ENCODE measurements at regions of chr10 and their contacts with region 1.

Region 1: DNA sequence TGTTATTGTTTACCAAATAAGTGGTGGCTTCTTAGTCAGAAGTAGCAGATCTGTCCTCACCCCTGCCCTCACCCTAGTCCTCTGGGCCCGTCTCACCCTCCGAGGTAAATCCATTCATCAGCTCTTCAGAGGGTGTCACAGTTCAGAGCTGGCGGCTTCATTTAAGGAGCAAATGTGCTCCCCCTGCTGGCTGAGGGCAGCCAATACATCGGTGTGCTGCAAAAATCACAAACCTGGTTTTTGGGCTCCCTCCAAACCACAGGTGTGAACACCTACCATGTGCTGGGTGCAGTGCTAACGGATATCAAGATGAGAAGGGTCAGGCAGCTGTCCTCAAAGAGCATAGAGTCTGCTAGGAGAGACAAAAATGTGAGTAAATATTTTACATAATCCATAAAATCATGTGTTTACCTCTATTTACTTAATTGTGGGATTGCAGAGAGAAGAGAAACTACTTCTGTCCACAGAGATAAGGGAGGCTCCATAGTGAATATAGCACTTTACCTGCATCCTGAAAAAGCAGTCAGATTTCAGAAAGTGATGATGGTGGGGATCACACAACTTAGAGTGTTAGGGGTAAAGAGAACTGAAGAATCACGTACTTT is 15.5 kb upstream of the CRTAC1 start:
- DNase-seq: peak; percentile 30 to 64 (median 61)
- ATAC-seq: peak; percentile 41 to 63
- H3K4me3 ChIP-seq: no peak overlapping the region
- H3K27ac ChIP-seq: no peak overlapping the region
- H3K4me1 ChIP-seq: peaks cover 3% of the 10 kb centered on the region
- H3K27me3 ChIP-seq: no peaks in the 10 kb centered on the region

Region 2: DNA sequence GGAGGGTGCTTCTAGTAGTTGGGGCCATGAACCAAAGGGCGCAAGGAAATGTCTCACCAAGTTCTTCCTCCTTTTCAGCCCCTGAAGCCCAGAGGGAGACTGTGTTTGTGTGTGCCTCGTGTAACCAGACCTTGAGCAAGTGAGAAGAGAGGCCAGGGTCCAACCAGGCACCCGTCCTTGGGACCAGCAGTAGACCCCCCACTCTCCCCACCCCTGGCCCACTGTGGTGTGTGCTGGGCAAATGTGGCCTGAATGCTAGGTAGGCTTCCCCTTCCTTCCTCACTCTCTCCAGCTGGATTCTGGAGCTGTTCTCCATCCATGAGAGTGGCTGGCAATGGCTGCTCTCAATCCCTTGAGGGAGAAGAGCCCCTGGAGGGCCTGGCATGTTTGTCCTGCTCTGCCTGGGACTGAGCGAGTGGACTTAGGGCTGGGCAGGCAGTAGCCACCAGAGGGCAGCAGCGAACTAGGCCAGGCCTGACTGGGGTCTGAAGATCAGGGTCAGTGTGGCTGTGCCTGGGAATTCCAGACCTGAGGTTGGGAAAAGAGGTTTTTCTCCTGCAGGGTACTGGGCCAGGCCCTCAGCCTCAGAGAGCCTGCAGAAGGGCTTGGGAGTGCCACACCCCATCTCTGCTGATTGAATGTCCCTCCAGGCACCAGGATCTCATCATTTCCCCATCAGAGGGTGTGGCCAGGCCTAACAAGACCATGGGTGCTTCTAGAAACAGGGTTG is 286.6 kb before region 1 on chr10:
- intact Hi-C with region 1: loop called in 2 of 4 experiments (anchors 10 kb)
- DNase-seq: peak; percentile 64 to 89 (median 87)
- ATAC-seq: peak; percentile 74 to 81
- H3K4me3 ChIP-seq: no peak overlapping the region
- H3K27ac ChIP-seq: no peak overlapping the region
- H3K4me1 ChIP-seq: no peaks in the 10 kb centered on the region
- H3K27me3 ChIP-seq: no peaks in the 10 kb centered on the region

Region 3: GRCh38 chr10:97921581-97922021 is 124.3 kb before region 1 on chr10:
- intact Hi-C with region 1: loop called in 1 of 4 experiments (anchors 5 kb)
- DNase-seq: peak in 1 of 3 donors; percentile 79
- ATAC-seq: peak; percentile 58 to 63
- H3K4me3 ChIP-seq: no peak overlapping the region
- H3K27ac ChIP-seq: peak overlapping the region; percentile 19
- H3K4me1 ChIP-seq: peaks cover 4% of the 10 kb centered on the region
- H3K27me3 ChIP-seq: no peaks in the 10 kb centered on the region